ENCODE measurements at regions of chr18 and their contacts with region 1.

Region 1: DNA sequence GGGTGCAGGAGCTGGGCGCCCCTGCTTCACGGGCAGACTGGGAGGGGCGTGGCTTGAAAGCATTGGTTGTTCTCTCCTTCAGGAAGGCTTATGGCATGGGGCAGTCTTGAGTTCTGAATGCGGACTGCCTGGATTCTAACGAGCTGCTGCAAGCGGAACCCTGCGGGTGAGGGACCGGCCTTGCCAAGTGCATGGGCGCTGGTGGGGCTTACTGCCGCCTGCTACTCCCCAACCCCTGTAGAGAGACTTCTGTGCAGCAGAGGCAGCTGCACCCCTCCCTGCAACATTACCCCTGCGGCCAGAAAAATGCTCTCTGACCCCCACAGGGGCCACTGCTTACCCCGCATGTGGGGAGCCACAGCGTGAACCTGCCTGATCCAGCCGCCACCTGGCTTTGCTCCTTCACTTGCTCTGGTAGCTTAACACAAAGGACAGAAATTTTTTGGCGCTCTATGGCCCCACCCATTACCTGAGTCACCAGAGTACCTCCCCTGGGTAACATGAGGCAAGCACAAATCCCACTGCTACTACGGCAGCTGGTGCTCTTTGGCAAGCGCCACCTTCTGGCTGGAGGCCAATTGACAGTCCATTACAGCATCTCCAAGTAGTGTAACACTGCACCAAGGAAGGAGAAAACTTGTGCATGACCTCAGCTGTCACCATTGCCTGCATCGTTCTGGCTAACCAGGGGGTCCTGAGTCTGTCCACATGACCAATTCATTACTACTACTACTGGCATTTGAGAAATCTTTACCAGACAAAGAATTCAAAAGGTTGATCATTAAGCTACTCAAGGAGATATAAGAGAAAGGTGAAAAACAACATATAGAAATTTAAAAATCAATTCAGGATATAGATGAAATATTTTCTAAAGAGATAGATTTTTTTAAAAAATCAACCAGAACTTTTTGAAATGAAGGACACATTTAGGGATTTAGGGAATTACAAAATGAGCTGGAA is 35.4 kb downstream of the MYL12B start:
- DNase-seq: peak; percentile 95
- H3K4me3 Mint-ChIP-seq: peak overlapping the region; percentile 88
- H3K27ac Mint-ChIP-seq: peak overlapping the region; percentile 72
- H3K4me1 Mint-ChIP-seq: peaks cover 9% of the 10 kb centered on the region
- H3K27me3 Mint-ChIP-seq: peaks cover 30% of the 10 kb centered on the region

Region 2: GRCh38 chr18:3261371-3262246 is 35.7 kb before region 1 on chr18 and contains the start of gene MYL12B:
- CTCF ChIA-PET with region 1: interaction called, 8 read pairs
- POLR2A ChIA-PET with region 1: interaction called, 15 read pairs
- DNase-seq: peak; percentile 86
- H3K4me3 Mint-ChIP-seq: peak within 1 kb of the TSS; percentile 89
- H3K27ac Mint-ChIP-seq: peak within 1 kb of the TSS; percentile 99
- H3K4me1 Mint-ChIP-seq: peaks cover 71% of the 10 kb centered on the region
- H3K27me3 Mint-ChIP-seq: no peaks in the 10 kb centered on the region
- total RNA-seq, gene MYL12B: 371 to 378 TPM

Region 3: DNA sequence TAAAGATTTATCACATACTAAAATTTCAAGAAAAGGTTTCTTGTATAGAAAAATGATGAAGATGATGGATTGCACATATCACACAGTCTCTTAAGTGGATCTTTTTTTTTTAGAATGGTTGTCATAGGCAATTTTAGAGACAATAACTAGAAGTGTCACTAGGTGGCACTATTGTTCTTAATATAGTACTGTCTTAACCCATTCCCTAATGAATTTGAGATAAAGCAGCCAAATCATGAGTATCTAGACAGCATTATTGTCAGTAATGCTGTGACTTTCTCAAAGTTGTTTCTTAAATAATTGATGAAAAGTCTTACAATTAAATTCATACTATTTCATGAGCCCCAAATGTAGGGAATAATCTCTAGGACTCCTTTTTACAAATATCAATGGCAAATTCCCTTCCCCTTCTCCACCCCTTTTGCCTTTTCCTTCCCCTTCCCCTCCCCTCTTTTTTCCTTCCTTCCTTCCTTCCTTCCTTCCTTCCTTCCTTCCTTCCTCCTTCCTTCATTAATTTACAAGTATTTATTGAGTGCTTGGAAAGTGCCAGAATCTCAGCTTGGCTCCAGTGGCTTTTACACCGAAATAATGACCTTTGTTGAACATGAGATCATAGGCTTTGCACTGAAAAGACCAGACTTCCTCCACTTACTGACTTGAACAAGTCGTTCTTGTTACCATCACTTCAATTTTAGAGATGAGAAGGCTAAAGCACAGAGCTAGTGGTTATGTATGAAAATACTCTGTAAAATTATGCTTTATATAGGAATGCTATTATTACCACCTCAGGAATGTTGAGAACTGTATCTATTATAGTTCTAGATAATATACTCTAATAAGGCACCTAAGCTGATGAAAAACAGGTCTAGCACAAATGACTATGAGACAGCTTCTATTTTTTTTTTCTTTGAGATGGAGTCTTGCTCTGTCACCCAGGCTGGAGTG is 15.6 kb before region 1 on chr18:
- CTCF ChIA-PET with region 1: interaction called, 23 read pairs
- POLR2A ChIA-PET with region 1: interaction called, 6 read pairs
- DNase-seq: no peak
- H3K4me3 Mint-ChIP-seq: no peak overlapping the region
- H3K27ac Mint-ChIP-seq: no peak overlapping the region
- H3K4me1 Mint-ChIP-seq: no peaks in the 10 kb centered on the region
- H3K27me3 Mint-ChIP-seq: no peaks in the 10 kb centered on the region

Region 4: DNA sequence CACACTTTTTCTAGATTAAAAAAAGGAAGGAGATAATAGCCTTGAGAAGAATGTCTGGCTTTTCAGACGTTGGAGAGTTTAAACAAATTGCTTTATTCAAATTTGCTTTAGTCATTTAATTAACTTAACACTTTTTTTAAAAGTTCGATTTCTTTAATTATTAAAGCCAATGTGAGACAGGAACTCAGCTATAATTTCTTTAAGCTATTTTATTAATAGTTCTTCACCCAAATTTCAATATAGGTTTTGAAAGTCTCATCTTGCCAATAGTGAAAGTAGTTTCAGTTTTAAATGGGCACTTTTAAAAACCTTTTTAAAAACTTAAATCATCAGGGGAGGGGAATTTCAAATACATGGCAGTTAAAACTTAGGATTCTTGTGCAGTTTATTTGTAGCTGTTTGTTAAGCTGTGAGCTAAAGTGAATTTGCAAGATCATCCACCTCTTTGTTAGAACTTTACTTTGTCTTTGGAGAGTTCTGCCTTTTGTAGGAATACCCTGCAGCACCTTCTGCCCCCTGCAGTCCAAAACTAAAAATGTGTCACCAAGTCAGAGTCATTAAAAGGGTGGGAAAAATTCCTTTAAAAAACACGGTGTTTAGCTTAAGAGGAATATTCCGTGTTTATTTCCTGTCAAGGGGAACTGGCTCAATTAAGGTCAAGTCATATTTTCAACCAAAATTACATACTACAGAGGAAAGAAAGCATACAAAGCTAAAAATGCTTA is 157.2 kb after region 1 on chr18:
- CTCF ChIA-PET with region 1: interaction called, 33 read pairs
- POLR2A ChIA-PET with region 1: interaction called, 19 read pairs
- DNase-seq: peak; percentile 33
- H3K4me3 Mint-ChIP-seq: peak overlapping the region; percentile 92
- H3K27ac Mint-ChIP-seq: peak overlapping the region; percentile 96
- H3K4me1 Mint-ChIP-seq: peaks cover 65% of the 10 kb centered on the region
- H3K27me3 Mint-ChIP-seq: no peaks in the 10 kb centered on the region

Region 5: DNA sequence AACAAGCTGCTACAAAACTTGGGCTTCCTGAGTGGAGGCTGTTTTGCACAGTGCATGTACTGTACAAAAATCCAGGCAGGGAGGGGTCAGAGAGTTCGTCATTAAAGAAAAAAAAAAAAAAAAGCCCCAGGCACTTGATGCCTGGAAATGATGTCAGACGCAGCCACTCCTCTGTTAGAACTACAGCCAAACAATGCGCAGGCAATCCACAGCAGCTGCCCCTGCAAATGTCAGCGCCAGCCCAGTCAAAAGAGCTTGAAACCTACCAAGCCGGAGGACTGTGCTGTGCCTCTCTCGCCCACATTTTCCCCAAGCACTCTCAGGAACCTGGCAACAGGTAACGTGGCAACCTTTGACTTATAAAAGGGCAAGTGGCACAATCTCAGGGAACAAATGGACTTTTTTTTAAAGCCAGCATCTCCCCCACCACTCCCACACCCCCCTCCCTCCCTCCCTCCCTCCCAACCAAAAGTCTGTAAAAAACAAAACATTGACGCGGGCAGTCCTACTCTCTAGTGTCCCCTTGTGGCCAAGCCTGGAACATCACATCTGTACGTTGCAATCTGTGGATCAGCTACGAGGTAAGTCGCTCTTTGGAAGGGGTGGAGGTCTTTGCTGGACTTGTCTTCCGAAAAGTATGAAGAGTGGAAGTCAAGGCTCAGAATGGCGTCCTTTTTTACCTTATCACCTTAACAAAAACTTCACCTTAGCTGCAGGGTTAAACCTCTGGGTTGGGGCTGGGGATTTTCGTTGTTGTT is 296.8 kb after region 1 on chr18:
- CTCF ChIA-PET with region 1: interaction called, 25 read pairs
- POLR2A ChIA-PET with region 1: interaction called, 15 read pairs
- DNase-seq: peak; percentile 91
- H3K4me3 Mint-ChIP-seq: peak overlapping the region; percentile 92
- H3K27ac Mint-ChIP-seq: peak overlapping the region; percentile 98
- H3K4me1 Mint-ChIP-seq: peaks cover 50% of the 10 kb centered on the region
- H3K27me3 Mint-ChIP-seq: no peaks in the 10 kb centered on the region